Activated CD4-positive, alpha-beta memory T cell treated with anti-CD3 and anti-CD28 coated beads for 36 hours (primary cell): ENCODE measurements at regions of chr17 and their contacts with region 1.

Region 1: GRCh38 chr17:27601069-27601975 is 29.7 kb upstream of the LGALS9 start:
- DNase-seq: peak; percentile 86
- H3K4me3 Mint-ChIP-seq: no peak overlapping the region
- H3K27ac Mint-ChIP-seq: no peak overlapping the region
- H3K4me1 Mint-ChIP-seq: peaks cover 4% of the 10 kb centered on the region
- H3K27me3 Mint-ChIP-seq: no peaks in the 10 kb centered on the region

Region 2: GRCh38 chr17:27353461-27354050 is 247.8 kb before region 1 on chr17:
- CTCF ChIA-PET with region 1: interaction called, 101 read pairs
- POLR2A ChIA-PET with region 1: no interaction called
- intact Hi-C with region 1: loop called (anchors 1 kb)
- DNase-seq: peak; percentile 93
- H3K4me3 Mint-ChIP-seq: peak overlapping the region; percentile 78
- H3K27ac Mint-ChIP-seq: peak overlapping the region; percentile 86
- H3K4me1 Mint-ChIP-seq: peaks cover 22% of the 10 kb centered on the region
- H3K27me3 Mint-ChIP-seq: no peaks in the 10 kb centered on the region

Region 3: GRCh38 chr17:27455914-27456680 is 145.2 kb before region 1 on chr17 and contains the start of gene KSR1:
- CTCF ChIA-PET with region 1: interaction called, 56 read pairs
- POLR2A ChIA-PET with region 1: no interaction called
- intact Hi-C with region 1: loop called (anchors 2 kb)
- DNase-seq: peak; percentile 88
- H3K4me3 Mint-ChIP-seq: peak within 1 kb of the TSS; percentile 92
- H3K27ac Mint-ChIP-seq: peak within 1 kb of the TSS; percentile 80
- H3K4me1 Mint-ChIP-seq: peaks cover 40% of the 10 kb centered on the region
- H3K27me3 Mint-ChIP-seq: no peaks in the 10 kb centered on the region
- total RNA-seq, gene KSR1: 55.0 to 60.8 TPM

Region 4: GRCh38 chr17:27481327-27481726 is 120.0 kb before region 1 on chr17:
- CTCF ChIA-PET with region 1: interaction called, 10 read pairs
- POLR2A ChIA-PET with region 1: no interaction called
- intact Hi-C with region 1: no loop called
- DNase-seq: peak; percentile 76
- H3K4me3 Mint-ChIP-seq: no peak overlapping the region
- H3K27ac Mint-ChIP-seq: peak overlapping the region; percentile 73
- H3K4me1 Mint-ChIP-seq: peaks cover 59% of the 10 kb centered on the region
- H3K27me3 Mint-ChIP-seq: no peaks in the 10 kb centered on the region

Region 5: DNA sequence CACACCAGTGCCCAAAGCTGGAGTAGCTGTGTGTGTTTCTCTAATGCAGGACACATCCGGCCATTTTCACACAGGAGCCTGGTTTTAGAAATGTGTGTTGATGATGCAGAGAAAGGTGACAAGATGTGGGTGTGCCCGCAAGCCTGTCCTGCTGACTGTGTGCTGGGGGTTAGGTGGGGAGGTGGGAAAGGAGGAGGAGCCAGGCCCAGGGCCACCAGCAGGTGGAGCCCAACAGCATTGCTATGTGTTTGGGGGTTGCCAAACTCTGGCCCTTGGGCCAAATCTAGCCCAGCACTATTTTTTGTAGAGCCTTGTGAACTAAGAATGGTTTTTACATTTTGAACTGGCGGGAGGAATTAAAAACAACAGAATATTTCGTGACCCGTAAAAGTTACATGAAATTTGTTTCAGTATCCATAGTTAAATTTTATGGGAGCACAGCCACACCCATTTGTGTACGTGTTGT is 32.0 kb before region 1 on chr17:
- CTCF ChIA-PET with region 1: interaction called, 51 read pairs
- POLR2A ChIA-PET with region 1: no interaction called
- intact Hi-C with region 1: loop called (anchors 1 kb)
- DNase-seq: peak; percentile 85
- H3K4me3 Mint-ChIP-seq: no peak overlapping the region
- H3K27ac Mint-ChIP-seq: no peak overlapping the region
- H3K4me1 Mint-ChIP-seq: peaks cover 71% of the 10 kb centered on the region
- H3K27me3 Mint-ChIP-seq: no peaks in the 10 kb centered on the region

Region 6: DNA sequence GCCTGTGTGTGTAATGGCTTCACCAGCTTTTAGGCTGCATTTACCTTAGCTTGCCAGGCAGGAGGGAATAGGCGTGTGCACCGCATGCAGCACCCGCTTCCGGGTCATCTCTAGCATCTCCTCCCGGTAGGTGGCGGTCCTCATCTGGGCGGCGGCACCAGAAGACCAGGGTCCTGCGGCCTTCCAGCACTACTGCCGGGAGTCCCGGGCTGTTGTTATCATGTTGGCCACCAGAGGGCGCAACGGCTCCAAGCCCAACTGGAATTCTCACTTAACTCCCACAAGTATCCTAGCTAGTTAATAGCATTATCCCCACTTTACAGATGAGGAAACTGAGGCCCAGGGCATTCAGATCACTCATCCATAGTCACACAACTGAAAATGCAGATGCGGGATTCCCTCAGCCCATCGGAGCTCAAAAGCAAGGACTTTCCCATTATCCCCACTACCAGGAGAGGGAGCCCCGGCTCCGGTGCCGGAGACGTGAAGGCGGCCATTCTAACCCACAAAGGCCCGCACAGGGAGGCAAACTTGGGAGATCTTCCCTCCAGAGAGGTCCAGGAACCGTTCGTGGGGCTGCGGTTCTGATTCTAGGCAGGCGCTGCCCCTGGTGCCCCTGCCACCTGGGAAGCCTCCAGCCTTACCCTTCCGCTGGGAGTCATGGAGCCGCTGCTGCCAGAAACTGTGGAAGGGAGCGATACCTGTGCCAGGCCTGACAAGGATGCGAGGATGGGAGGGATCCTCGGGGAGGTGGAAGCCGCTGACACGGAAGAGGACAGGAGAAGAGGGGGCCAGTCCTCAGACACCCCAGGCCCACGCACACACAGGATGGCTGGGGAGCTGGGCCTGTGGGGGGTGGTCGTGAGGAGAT is 53.6 kb after region 1 on chr17:
- CTCF ChIA-PET with region 1: interaction called, 207 read pairs
- POLR2A ChIA-PET with region 1: no interaction called
- intact Hi-C with region 1: loop called (anchors 1 kb)
- DNase-seq: peak; percentile 83
- H3K4me3 Mint-ChIP-seq: no peak overlapping the region
- H3K27ac Mint-ChIP-seq: no peak overlapping the region
- H3K4me1 Mint-ChIP-seq: peaks cover 4% of the 10 kb centered on the region
- H3K27me3 Mint-ChIP-seq: no peaks in the 10 kb centered on the region

Region 7: DNA sequence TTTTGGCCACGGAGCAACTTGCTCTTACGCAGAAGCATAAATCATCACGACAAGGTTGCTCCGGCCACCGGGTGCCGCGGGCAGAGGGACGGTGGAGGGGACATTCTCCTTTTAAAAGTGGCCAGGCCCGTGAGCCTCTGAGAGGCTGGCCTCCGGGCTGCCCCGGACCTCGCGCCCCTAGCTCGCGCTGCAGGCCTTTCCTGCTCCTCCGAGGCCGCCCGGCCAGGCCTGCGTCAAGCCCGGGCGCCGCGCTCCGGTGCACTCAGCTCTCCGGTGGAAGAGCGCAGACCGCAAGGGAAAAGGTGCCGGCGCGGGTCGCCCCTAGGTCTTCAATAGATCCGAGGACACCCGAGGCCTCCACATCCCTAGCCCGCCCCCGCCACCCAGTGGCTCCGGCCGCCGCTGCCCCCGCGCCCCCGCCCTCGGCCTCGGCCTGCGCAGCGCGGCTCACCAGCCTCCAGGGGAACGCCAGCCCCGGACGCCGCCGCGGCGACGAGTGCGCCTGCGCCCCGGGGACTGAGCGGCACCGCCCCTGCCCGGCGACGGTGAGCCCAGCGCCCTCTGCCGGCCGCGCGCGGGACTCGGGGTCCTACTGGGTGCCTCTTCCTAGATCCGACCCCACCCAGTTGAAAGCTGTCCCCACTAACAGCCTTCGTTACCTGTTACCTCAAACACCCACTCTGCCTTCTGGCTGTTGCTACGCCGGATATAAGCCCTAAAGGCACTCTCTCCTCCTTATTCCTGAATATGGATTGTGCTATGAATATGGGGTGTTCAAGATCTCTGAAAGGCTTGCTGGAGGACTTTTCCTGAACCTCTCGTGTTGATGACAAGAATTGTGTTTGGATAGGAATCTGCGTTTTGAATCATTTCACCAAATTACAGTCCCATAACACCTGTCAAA is 291.8 kb after region 1 on chr17 and contains the start of gene LYRM9:
- CTCF ChIA-PET with region 1: no interaction called
- POLR2A ChIA-PET with region 1: no interaction called
- intact Hi-C with region 1: no loop called
- DNase-seq: peak; percentile 93
- H3K4me3 Mint-ChIP-seq: peak within 1 kb of the TSS; percentile 74
- H3K27ac Mint-ChIP-seq: peak within 1 kb of the TSS; percentile 36
- H3K4me1 Mint-ChIP-seq: peaks cover 12% of the 10 kb centered on the region
- H3K27me3 Mint-ChIP-seq: peaks cover 14% of the 10 kb centered on the region
- total RNA-seq, gene LYRM9: 5.7 to 6.8 TPM